HEK293 (cell line): ENCODE measurements at regions of chr10 and their contacts with region 1.

Region 1: GRCh38 chr10:12042797-12043651 is at the start of gene UPF2:
- H3K4me3 ChIP-seq: peak within 1 kb of the TSS; percentile 87
- H3K27ac ChIP-seq: peak within 1 kb of the TSS; percentile 100
- H3K4me1 ChIP-seq: peaks cover 10% of the 10 kb centered on the region
- CTCF ChIP-seq: no peak

Region 2: GRCh38 chr10:12068449-12069269 is 25.6 kb after region 1 on chr10 and contains the start of gene DHTKD1:
- CTCF ChIA-PET with region 1: interaction called, 6 read pairs
- POLR2A ChIA-PET with region 1: interaction called, 40 read pairs
- H3K4me3 ChIP-seq: peak within 1 kb of the TSS; percentile 73
- H3K27ac ChIP-seq: peak within 1 kb of the TSS; percentile 90
- H3K4me1 ChIP-seq: no peaks in the 10 kb centered on the region
- CTCF ChIP-seq: peak; percentile 30; the same call in 1 of the 2 replicates